Naive thymus-derived CD8-positive, alpha-beta T cell (primary cell): ENCODE measurements at regions of chr11 and their contacts with region 1.

Region 1: DNA sequence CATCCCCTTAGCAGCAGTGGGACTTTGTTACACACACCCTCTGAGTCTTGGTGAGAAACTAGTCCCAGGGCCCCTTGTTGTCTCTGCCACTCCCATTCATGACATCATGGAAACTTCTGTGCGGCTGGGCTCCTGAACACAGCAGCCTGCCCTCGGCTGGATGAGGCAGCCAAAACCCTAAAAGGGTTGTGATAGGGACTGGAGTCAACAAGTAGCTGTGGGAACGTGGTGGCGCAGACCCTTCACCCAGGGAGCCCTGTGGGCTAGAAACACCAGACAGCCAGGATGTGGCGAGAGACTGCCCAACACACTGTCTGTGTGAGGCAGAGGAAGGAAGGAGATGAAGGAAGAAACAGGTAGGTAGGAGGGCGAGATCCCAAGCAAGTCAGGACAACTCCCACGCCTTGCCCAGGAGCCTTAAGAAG is 3.9 kb downstream of the CD3D start:
- DNase-seq: peak; percentile 70 to 98 (median 90)
- ATAC-seq: peak; percentile 71 to 76
- H3K4me3 Mint-ChIP-seq: peak overlapping the region; percentile 87 to 99 (median 92)
- H3K27ac Mint-ChIP-seq: peak overlapping the region; percentile 97 to 100 (median 99)
- H3K4me1 Mint-ChIP-seq: peaks cover 34 to 67% (median 59%) of the 10 kb centered on the region in 4 donors
- H3K27me3 Mint-ChIP-seq: peaks cover 0 to 1% (median 0%) of the 10 kb centered on the region in 5 donors

Region 2: DNA sequence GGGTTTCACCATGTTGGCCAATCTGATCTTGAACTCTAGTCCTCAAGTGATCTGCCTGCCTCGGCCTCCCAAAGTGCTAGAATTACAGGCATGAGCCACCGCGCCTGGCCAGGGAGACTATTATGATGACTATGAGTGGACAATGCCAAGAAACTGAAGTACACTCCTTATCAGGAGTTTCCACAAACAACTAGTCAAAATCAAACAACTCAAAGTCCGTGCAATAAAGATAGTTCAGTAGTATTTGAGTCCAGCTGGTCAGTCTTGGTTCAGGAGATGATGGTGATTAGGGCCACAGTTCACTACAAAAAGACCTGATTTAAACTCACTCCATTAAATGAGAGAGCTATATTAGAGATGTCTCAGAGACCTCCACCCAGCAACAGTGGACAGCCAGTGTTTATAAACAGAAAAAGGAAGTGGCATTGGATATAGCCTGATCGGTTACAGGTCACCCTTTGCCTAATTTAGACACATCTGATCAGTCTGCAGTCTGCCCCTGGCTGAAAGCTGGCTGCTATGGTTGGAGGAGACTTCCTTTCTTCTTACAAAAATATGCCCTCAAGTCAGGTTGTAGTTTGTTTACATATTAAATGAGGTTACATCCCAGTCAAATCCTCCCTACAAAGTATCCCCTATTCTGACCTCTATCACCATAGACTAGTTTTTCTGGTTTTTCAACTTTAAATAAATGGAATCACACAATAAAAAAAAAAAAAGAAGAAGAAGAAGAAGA is 17.1 kb before region 1 on chr11:
- POLR2A ChIA-PET with region 1: no interaction called
- DNase-seq: no peak
- ATAC-seq: no peak
- H3K4me3 Mint-ChIP-seq: peak overlapping the region in 9 of 10 donors; percentile 14 to 78 (median 62)
- H3K27ac Mint-ChIP-seq: peak overlapping the region; percentile 54 to 99 (median 86)
- H3K4me1 Mint-ChIP-seq: peaks cover 38 to 83% (median 70%) of the 10 kb centered on the region in 4 donors
- H3K27me3 Mint-ChIP-seq: no peaks in the 10 kb centered on the region

Region 3: GRCh38 chr11:118353084-118353710 is 14.5 kb after region 1 on chr11:
- POLR2A ChIA-PET with region 1: interaction called, 18 read pairs
- DNase-seq: peak in 3 of 10 donors; percentile 70 to 74 (median 73)
- ATAC-seq: peak; percentile 53 to 59
- H3K4me3 Mint-ChIP-seq: peak overlapping the region in 1 of 10 donors; percentile 20
- H3K27ac Mint-ChIP-seq: peak overlapping the region; percentile 88 to 100 (median 96)
- H3K4me1 Mint-ChIP-seq: peaks cover 26 to 43% (median 36%) of the 10 kb centered on the region in 4 donors
- H3K27me3 Mint-ChIP-seq: peaks cover 0 to 2% (median 0%) of the 10 kb centered on the region in 5 donors

Region 4: DNA sequence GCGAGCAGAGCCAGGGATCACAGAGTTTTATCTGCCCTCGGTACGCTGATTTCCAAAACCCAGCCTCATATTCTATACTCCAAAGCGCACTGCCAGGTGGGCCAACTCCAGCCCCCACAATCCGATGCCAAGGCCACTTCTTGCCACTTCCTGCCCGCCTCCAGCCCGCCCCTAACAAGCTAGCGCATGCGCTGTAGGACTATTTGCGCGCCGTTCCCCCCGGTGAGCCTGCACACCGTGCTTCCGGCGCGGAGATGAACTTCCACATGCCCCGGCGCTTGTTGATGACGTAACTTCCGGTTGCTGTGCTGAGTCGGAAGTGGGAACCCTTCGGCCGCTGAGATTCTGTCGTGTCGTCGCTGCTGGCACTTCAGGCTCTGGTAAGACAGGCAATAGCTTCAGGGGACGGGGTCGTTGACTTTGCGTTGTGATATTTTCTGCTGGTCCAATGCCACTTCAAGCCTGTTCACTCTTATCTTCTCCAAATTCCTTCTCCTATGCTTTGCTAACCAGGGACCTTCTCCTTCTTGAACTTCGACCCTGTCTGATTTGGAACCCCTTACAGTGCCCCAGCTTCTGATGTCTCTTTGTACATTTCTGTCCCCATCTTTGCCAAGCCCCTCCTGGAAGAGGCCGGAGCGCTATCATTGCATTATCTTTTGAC is 20.8 kb after region 1 on chr11 and contains the start of gene UBE4A:
- POLR2A ChIA-PET with region 1: interaction called, 13 read pairs
- DNase-seq: peak; percentile 90 to 99 (median 96)
- ATAC-seq: peak; percentile 86 to 93
- H3K4me3 Mint-ChIP-seq: peak within 1 kb of the TSS; percentile 85 to 98 (median 94)
- H3K27ac Mint-ChIP-seq: peak within 1 kb of the TSS; percentile 97 to 99 (median 98)
- H3K4me1 Mint-ChIP-seq: peaks cover 32 to 56% (median 55%) of the 10 kb centered on the region in 4 donors
- H3K27me3 Mint-ChIP-seq: peaks cover 0 to 4% (median 0%) of the 10 kb centered on the region in 5 donors
- polyA plus RNA-seq, gene UBE4A: 20.7 to 31.0 (median 24.3) TPM